Prostate gland (tissue), 2 donors: ENCODE measurements at regions of chr7 and their contacts with region 1.

Region 1: DNA sequence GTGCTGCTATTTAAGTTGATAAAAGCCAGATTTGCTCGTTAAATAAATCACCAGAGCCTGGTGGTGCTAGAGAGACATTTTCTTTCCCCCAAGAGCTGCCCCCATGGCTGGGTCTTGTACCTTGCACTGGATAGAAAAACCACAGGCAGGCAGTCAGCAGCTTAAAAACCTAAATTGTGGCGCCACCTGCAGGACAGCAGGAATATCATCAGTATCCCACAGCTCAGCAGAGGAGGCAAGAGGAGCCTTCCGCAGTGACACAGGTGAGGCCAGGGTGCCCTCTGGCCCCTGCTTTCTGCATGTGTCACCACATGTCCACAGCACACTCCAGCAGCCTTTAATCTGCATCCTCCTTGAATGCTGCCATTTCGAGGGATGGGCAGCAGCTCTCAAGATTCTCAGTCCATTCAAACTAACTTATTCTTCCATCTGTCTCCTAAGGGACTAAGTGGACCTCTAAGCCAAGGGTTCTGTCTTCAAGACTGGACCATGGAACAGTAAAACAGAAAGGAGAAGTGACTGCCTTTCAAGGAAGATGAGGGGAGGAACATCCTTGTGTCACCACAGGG is 4.5 kb upstream of the PLXNA4 start:
- DNase-seq: peak; percentile 76
- H3K4me3 ChIP-seq: no peak overlapping the region
- H3K27ac ChIP-seq: no peak overlapping the region
- H3K4me1 ChIP-seq: peaks cover under 1% of the 10 kb centered on the region
- H3K27me3 ChIP-seq: no peaks in the 10 kb centered on the region
- CTCF ChIP-seq: peak; percentile 68 to 84 (median 76)
- POLR2A ChIP-seq: no peak

Region 2: DNA sequence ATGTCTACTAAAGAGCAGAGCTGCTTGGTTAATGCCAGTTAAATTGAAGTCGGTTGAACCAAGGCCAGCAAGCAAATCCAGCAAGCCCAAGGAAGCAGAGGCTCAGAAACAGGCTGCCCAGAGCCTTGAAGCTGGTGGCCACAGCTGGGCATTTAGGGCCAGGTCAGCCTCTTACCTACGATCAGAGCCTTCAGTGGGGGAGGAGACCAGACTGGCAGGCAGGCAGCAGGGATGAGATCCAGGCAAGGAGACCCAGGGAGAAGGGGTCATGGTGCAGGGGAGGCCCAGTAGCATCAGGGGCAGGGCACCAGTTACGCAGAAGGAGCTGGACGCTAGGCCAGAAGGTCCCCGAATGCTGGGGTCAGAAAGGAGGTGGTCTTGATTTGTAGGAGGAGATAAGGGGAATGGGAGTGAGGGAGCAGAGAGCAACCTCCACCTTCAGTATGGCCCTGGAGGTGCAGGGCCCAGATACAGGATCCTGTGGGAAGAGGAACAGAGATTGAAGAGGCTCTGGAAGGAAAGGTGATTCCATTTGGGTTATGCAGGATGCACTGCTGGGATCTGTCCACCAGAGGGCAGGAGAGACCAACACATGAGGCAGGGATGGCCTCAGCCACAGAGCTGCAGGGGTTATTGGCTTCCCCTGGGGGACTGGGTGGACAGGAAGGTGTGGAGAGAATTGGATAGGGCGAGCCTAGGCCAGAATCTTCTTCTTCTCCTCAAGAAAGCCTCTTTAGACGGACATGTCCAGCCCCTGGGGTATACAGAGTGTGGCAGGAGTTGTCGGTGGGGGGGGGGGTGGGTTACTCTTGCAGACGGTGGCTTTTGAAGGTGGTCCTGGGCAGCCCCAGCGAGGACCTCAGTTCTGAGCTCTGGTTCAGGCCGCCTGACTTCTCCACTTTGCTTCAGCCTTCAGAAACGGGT is 891.8 kb before region 1 on chr7:
- intact Hi-C with region 1: loop called (anchors 5 kb)
- DNase-seq: peak; percentile 35
- H3K4me3 ChIP-seq: no peak overlapping the region
- H3K27ac ChIP-seq: no peak overlapping the region
- H3K4me1 ChIP-seq: no peaks in the 10 kb centered on the region
- H3K27me3 ChIP-seq: no peaks in the 10 kb centered on the region
- CTCF ChIP-seq: peak; percentile 82 to 93 (median 90)
- POLR2A ChIP-seq: no peak

Region 3: DNA sequence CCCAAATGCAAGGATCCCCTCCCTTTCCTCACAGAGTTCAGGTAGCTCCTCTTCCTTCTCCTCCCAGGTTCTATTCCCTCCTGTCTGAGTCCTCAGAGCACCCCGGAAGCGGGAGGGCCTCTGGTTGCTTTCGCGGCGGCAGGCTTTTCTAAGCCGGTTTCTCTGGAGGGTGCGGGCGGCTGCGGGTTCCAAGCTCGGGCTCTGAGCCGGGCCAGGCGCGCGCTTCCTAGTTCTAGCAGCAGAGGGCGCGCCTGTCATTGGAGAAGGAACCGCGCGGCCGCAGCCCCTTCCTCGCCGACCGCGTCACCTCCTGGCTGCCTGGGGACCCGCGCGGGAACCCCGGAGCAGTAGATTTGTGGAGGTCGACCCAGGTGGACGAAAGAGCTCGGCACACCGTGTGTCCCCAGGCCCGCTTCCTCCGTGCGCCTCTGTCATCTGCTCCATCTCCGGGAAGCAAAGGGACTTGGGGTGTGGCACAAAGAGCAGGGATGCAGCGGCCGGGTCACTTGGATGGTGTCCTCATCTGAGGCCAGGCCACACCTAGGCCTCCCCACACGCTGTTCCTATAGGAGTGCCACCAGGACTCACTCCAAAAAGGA is 635.4 kb before region 1 on chr7:
- intact Hi-C with region 1: loop called (anchors 5 kb)
- DNase-seq: peak; percentile 26
- H3K4me3 ChIP-seq: peak overlapping the region in 1 of 2 donors; percentile 2
- H3K27ac ChIP-seq: no peak overlapping the region
- H3K4me1 ChIP-seq: no peaks in the 10 kb centered on the region
- H3K27me3 ChIP-seq: no peaks in the 10 kb centered on the region
- CTCF ChIP-seq: peak; percentile 56 to 89 (median 82)
- POLR2A ChIP-seq: no peak

Region 4: GRCh38 chr7:132318352-132319318 is 262.2 kb before region 1 on chr7:
- intact Hi-C with region 1: loop called (anchors 1 kb)
- DNase-seq: peak; percentile 82
- H3K4me3 ChIP-seq: no peak overlapping the region
- H3K27ac ChIP-seq: no peak overlapping the region
- H3K4me1 ChIP-seq: peaks cover 3% of the 10 kb centered on the region
- H3K27me3 ChIP-seq: no peaks in the 10 kb centered on the region
- CTCF ChIP-seq: peak; percentile 88 to 90 (median 90)
- POLR2A ChIP-seq: no peak

Region 5: GRCh38 chr7:132402751-132403245 is 178.0 kb before region 1 on chr7:
- intact Hi-C with region 1: no loop called
- DNase-seq: no peak
- H3K4me3 ChIP-seq: no peak overlapping the region
- H3K27ac ChIP-seq: no peak overlapping the region
- H3K4me1 ChIP-seq: no peaks in the 10 kb centered on the region
- H3K27me3 ChIP-seq: no peaks in the 10 kb centered on the region
- CTCF ChIP-seq: no peak
- POLR2A ChIP-seq: no peak